Right ventricle myocardium inferior (tissue), 1 donor: ENCODE measurements at regions of chr6 and their contacts with region 1.

Region 1: DNA sequence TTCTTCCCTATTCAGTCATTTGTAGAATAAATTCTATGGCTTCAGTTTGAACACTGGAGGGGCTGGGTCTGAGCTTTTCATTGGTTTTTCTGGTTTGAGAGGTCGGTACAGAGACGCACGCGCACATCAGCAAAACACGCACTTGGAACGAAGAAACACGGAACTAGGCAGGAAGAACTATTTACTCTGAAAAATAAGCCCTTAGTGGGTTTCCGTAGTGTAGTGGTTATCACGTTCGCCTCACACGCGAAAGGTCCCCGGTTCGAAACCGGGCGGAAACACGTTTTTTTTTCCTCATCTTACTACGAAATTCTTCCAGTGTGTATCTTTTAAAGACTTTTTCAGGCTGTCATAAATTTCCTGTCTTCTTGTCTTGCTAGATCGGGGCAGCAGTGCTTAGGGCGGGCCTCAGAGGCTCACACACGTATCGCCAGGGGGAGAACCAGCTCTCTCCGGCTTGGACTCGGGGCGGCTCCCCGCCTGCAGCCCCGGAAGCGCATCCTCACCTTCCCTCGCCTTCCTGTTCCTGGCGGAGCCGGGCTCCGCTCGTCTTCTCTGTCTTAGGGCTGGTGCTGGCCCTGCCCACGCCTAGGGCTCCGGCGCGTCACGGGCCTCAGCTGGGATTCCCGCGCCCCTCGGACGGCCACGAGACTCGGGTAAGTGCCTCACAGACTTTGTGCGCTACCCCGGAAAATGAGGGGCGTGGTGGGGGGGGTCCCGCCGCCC is at the start of gene HMGN4:
- DNase-seq: peak; percentile 90
- ATAC-seq: peak; percentile 89
- total RNA-seq, gene HMGN4: 29.0 TPM

Region 2: GRCh38 chr6:26312501-26313390 is 225.3 kb before region 1 on chr6:
- intact Hi-C with region 1: loop called (anchors 5 kb)
- DNase-seq: peak; percentile 79
- ATAC-seq: peak; percentile 92

Region 3: GRCh38 chr6:26553635-26554446 is 15.8 kb after region 1 on chr6:
- intact Hi-C with region 1: loop called (anchors 1 kb)
- DNase-seq: peak; percentile 80
- ATAC-seq: peak; percentile 83